Psoas muscle (tissue), 8 donors: ENCODE measurements at regions of chr1 and their contacts with region 1.

Region 1: GRCh38 chr1:87638636-87639035 is 310.0 kb downstream of the LMO4 start:
- DNase-seq: no peak
- ATAC-seq: no peak
- H3K4me3 ChIP-seq: no peak overlapping the region
- H3K27ac ChIP-seq: no peak overlapping the region
- H3K4me1 ChIP-seq: no peaks in the 10 kb centered on the region
- H3K27me3 ChIP-seq: no peaks in the 10 kb centered on the region
- CTCF ChIP-seq: no peak

Region 2: DNA sequence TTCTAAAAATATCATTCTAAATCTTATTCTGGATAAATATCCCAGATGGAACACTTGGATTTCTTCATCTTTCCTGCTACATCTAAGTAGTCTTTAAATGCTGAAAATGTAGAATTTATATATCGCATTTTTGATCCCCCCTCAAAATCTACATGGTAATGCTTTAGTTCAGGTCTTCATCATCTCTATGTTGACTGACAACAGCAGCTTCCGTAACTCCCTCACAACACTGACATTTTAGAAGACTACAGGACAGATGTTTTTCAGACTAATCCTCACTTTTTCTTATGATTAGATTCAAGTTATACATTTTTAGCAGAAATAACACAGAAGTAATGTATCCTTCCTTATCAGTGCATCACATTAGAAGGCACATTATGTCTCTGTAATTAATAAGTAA is 26.5 kb after region 1 on chr1:
- intact Hi-C with region 1: loop called in 1 of 2 experiments (anchors 1 kb)
- DNase-seq: no peak
- ATAC-seq: no peak
- H3K4me3 ChIP-seq: no peak overlapping the region
- H3K27ac ChIP-seq: no peak overlapping the region
- H3K4me1 ChIP-seq: no peaks in the 10 kb centered on the region
- H3K27me3 ChIP-seq: peaks cover 0 to 2% (median 0%) of the 10 kb centered on the region in 3 donors
- CTCF ChIP-seq: no peak